Mucosa of descending colon (tissue), 3 donors: ENCODE measurements at regions of chr12 and their contacts with region 1.

Region 1: GRCh38 chr12:10190558-10191388 is 11.9 kb downstream of the TMEM52B start:
- DNase-seq: peak in 2 of 3 donors; percentile 54 to 75
- ATAC-seq: peak; percentile 92
- H3K4me3 ChIP-seq: no peak overlapping the region
- H3K4me1 ChIP-seq: no peaks in the 10 kb centered on the region
- CTCF ChIP-seq: peak; percentile 46

Region 2: GRCh38 chr12:9827209-9827888 is 363.4 kb before region 1 on chr12 and contains the start of gene KLRF1:
- intact Hi-C with region 1: no loop called
- DNase-seq: no peak
- ATAC-seq: no peak
- H3K4me3 ChIP-seq: no peak within 1 kb of the TSS
- H3K4me1 ChIP-seq: no peaks in the 10 kb centered on the region
- CTCF ChIP-seq: no peak
- total RNA-seq, gene KLRF1: 0.55 to 0.73 (median 0.58) TPM

Region 3: GRCh38 chr12:9961106-9961505 is 229.7 kb before region 1 on chr12:
- intact Hi-C with region 1: no loop called
- DNase-seq: no peak
- ATAC-seq: no peak
- H3K4me3 ChIP-seq: no peak overlapping the region
- H3K4me1 ChIP-seq: no peaks in the 10 kb centered on the region
- CTCF ChIP-seq: no peak

Region 4: DNA sequence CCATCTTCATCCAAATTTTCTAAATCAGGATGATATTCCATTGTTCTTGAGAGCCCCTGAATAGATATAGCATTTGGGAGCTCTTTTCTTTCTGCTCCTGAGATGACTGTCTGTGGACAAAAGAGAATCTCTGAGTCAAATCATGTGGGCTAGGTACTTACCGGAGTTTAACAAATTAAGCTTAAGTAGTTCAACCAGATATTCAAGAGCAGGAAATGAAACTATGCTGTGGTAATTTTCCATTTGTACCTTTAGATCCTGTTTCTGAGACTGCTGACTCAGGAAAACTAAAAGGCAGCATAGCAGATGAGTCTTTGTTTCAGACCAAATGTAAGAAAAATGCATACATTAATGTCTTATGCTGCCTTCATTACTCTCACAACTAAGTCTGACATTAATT is 60.7 kb before region 1 on chr12 and contains the start of gene CLEC7A:
- intact Hi-C with region 1: no loop called
- DNase-seq: no peak
- ATAC-seq: peak; percentile 24
- H3K4me3 ChIP-seq: no peak within 1 kb of the TSS
- H3K4me1 ChIP-seq: no peaks in the 10 kb centered on the region
- CTCF ChIP-seq: no peak
- total RNA-seq, gene CLEC7A: 3.1 to 12.0 (median 6.3) TPM

Region 5: GRCh38 chr12:10153271-10154144 is 37.3 kb before region 1 on chr12:
- intact Hi-C with region 1: loop called in 1 of 2 experiments (anchors 2 kb)
- DNase-seq: peak; percentile 74 to 76 (median 74)
- ATAC-seq: peak; percentile 97
- H3K4me3 ChIP-seq: no peak overlapping the region
- H3K4me1 ChIP-seq: no peaks in the 10 kb centered on the region
- CTCF ChIP-seq: peak; percentile 66